ENCODE measurements at regions of chr6 and their contacts with region 1.

Region 1: GRCh38 chr6:46419576-46420002 is 71.7 kb downstream of the RCAN2 start:
- DNase-seq: peak; percentile 25
- ATAC-seq: no peak
- H3K4me3 ChIP-seq: no peak overlapping the region
- H3K27ac ChIP-seq: no peak overlapping the region
- H3K4me1 ChIP-seq: no peaks in the 10 kb centered on the region
- H3K27me3 ChIP-seq: no peaks in the 10 kb centered on the region
- CTCF ChIP-seq: peak; percentile 74; the same call in 1 of the 2 replicates

Region 2: DNA sequence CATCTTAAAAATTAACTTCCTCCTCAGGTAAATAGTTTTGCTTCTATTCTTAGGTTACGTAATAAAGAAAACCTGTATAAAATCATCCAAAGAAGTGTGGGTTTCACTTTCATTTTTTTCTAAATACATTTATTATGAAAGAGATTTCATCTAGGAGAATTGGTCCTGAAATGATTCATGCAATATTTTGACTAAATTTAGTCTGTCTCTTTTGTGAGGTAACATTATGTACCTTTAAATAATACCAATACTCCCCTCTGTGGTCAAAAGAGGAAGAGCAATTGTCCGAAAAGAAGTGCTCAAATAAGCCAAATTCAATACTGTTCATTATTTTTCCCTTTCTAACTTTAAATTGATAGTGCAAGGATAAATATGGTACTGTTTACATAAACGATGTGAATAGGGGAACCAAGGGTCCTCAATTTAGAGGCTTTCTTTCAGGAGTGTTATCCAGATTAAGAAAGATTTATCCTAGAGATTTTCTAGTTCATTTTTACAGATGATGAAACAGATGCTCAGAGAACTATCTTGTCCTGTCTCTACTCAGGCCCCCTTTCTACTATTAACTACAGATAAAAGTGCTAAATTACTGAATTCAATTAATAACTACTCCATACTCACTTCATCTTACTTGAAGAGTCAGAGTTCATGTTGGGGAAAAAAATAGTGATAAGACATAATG is 206.8 kb after region 1 on chr6:
- CTCF ChIA-PET with region 1: interaction called, 7 read pairs
- POLR2A ChIA-PET with region 1: no interaction called
- in situ Hi-C with region 1: no loop called
- intact Hi-C with region 1: loop called (anchors 2 kb)
- DNase-seq: no peak
- ATAC-seq: no peak
- H3K4me3 ChIP-seq: no peak overlapping the region
- H3K27ac ChIP-seq: no peak overlapping the region
- H3K4me1 ChIP-seq: no peaks in the 10 kb centered on the region
- H3K27me3 ChIP-seq: no peaks in the 10 kb centered on the region
- CTCF ChIP-seq: peak; percentile 67; the same call in 1 of the 2 replicates

Region 3: DNA sequence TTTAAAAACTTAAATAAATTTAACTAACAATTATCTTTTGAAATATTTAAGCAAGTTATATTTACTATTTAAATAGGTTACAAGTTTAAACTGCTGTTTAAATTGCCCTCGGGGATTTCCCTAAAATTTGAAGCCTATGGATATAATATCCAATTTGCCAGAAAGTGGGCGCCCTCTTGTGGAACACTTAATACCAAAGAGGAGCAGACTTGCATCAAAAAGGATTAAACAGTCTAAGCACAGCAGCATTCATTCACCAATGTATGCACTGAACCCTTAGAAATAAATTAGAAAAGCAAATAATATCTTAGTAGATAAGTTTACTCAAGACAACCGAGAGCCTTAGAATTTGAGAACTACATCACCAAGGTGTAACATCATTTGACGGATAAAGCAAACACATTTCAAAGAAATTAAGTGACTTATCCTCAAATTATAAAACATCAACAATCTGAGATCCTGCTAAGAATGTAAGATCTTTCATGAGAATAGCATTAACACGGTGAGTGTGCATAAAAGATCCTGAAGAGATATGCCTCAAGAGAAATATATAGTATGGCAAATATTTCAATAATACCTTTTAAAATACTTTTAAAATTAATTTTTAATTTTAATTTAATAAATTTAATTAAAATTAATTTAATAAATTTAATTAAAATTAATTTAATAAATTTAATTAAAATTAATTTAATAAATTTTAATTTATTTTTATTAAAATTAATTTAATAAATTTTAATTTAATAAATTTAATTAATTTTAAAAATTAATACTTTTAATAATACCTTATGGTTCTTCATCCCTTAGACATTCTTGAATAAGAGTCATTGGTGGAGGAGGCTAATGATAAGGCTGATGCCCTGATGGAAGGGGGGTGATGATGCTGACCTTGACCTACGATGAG is 362.1 kb after region 1 on chr6:
- CTCF ChIA-PET with region 1: no interaction called
- POLR2A ChIA-PET with region 1: no interaction called
- in situ Hi-C with region 1: no loop called
- intact Hi-C with region 1: loop called (anchors 5 kb)
- DNase-seq: peak; percentile 24
- ATAC-seq: peak; percentile 89
- H3K4me3 ChIP-seq: no peak overlapping the region
- H3K27ac ChIP-seq: no peak overlapping the region
- H3K4me1 ChIP-seq: no peaks in the 10 kb centered on the region
- H3K27me3 ChIP-seq: no peaks in the 10 kb centered on the region
- CTCF ChIP-seq: peak; percentile 80; the same call in 1 of the 2 replicates

Region 4: GRCh38 chr6:46990031-46990644 is 570.5 kb after region 1 on chr6:
- CTCF ChIA-PET with region 1: no interaction called
- POLR2A ChIA-PET with region 1: no interaction called
- in situ Hi-C with region 1: no loop called
- intact Hi-C with region 1: loop called (anchors 2 kb)
- DNase-seq: no peak
- ATAC-seq: peak; percentile 69
- H3K4me3 ChIP-seq: no peak overlapping the region
- H3K27ac ChIP-seq: no peak overlapping the region
- H3K4me1 ChIP-seq: 0 out of 2 replicates have a peak, but pooled peaks cover 4% of the 10 kb centered on the region
- H3K27me3 ChIP-seq: no peaks in the 10 kb centered on the region
- CTCF ChIP-seq: no peak

Measured in Panc1 (cell line).